GM12878 (cell line): ENCODE measurements at regions of chr22 and their contacts with region 1.

Region 1: DNA sequence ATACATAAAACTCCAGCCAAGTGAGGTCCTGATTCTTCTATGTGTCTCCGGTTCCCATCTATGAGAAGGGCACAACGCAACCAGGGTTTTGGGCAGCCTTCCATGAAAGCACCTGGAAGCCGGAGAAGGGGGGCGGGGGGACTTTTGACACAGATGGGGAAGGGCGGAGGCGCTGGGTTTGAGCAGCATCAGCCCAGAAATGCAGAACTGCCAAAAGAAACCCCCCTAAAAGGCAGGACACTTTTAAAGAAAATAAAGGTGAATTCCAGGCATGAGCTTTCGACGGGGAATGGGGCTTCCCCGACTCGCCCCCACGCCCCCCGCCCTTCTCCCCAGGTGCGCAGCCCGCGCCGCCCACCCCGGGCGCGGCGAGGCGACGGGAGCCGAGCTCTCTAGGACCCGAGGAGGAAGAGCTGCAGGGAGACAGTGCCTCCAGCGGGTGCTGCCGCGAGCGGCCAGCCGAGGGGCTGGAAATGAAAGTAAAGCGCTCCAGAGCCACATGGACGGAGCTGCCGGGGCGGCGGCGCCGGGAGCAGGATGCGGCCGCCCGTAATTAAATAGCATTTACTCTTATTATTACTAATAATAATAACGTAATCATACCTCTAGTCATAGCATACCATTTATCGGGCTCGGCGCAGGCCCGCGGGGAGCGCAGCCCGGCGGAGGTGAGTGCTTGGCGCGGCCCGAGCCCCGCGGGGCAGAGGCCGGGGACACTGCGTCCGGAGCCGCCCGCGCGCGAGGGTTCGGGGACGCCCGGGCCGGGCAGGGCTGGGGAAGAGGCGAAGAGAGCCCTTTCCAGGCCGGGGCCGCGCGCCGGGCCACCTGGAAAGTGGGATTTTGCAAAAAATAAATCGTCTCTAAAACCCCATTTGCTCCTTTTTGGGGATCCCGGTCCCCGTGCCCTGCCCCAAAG is at the start of gene ZC3H7B:
- DNase-seq: peak; percentile 28
- ATAC-seq: peak; percentile 98
- H3K4me3 ChIP-seq: peak within 1 kb of the TSS; percentile 93
- H3K27ac ChIP-seq: peak within 1 kb of the TSS; percentile 91
- H3K4me1 ChIP-seq: peaks cover 4% of the 10 kb centered on the region
- H3K27me3 ChIP-seq: no peaks in the 10 kb centered on the region
- CTCF ChIP-seq: peak; percentile 57 to 66 (median 58)
- EP300 ChIP-seq: no peak
- POLR2A ChIP-seq: peak; percentile 84
- RAD21 ChIP-seq: peak; percentile 45
- polyA plus RNA-seq, gene ZC3H7B: 0.26 to 0.34 TPM

Region 2: GRCh38 chr22:41285820-41286638 is 15.3 kb before region 1 on chr22 and contains the start of gene RANGAP1:
- CTCF ChIA-PET with region 1: interaction called, 7 read pairs
- POLR2A ChIA-PET with region 1: interaction called, 19 read pairs
- RAD21 ChIA-PET with region 1: interaction called, 9 read pairs
- SMC1A ChIA-PET with region 1: interaction called, 4 read pairs
- in situ Hi-C with region 1: no loop called
- intact Hi-C with region 1: no loop called
- DNase-seq: peak; percentile 98
- ATAC-seq: peak; percentile 98
- H3K4me3 ChIP-seq: peak within 1 kb of the TSS; percentile 96
- H3K27ac ChIP-seq: peak within 1 kb of the TSS; percentile 81
- H3K4me1 ChIP-seq: peaks cover 7% of the 10 kb centered on the region
- H3K27me3 ChIP-seq: no peaks in the 10 kb centered on the region
- CTCF ChIP-seq: peak in 2 of 3 experiments; percentile 8 to 15; a peak in 1 of 6 replicates
- EP300 ChIP-seq: peak; percentile 21 to 46; a peak in 1 of 4 replicates
- POLR2A ChIP-seq: peak; percentile 92
- RAD21 ChIP-seq: no peak
- polyA plus RNA-seq, gene RANGAP1: 2.5 to 9.1 TPM